Heart right ventricle (tissue), 16 donors: ENCODE measurements at regions of chr1 and their contacts with region 1.

Region 1: DNA sequence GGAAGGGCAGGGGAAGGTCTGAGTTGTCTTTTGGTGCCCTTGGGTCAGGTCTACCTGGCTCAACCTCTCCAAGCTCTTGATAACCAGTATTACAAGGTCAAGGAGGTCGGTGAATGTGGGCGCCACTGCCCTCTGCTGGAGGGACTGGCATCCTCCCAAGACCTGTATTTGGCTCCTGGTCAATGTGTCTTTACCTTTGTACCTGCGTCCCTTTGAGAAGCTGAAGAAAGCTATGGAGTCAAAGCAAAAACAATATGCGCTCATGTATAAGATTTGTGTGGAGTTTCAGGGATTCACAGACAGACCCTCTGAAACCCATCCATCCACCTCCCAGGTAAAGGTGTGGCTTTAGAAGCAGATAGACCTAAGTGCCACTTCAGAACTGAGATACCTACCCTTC is 61.8 kb upstream of the NBL1 start:
- DNase-seq: peak; percentile 40 to 61
- ATAC-seq: peak in 6 of 8 donors; percentile 27 to 63 (median 55)
- H3K4me3 ChIP-seq: no peak overlapping the region
- H3K27ac ChIP-seq: no peak overlapping the region
- H3K4me1 ChIP-seq: peaks cover 0 to 24% (median 0%) of the 10 kb centered on the region in 9 donors
- H3K27me3 ChIP-seq: no peaks in the 10 kb centered on the region
- CTCF ChIP-seq: peak; percentile 35 to 78 (median 57)

Region 2: DNA sequence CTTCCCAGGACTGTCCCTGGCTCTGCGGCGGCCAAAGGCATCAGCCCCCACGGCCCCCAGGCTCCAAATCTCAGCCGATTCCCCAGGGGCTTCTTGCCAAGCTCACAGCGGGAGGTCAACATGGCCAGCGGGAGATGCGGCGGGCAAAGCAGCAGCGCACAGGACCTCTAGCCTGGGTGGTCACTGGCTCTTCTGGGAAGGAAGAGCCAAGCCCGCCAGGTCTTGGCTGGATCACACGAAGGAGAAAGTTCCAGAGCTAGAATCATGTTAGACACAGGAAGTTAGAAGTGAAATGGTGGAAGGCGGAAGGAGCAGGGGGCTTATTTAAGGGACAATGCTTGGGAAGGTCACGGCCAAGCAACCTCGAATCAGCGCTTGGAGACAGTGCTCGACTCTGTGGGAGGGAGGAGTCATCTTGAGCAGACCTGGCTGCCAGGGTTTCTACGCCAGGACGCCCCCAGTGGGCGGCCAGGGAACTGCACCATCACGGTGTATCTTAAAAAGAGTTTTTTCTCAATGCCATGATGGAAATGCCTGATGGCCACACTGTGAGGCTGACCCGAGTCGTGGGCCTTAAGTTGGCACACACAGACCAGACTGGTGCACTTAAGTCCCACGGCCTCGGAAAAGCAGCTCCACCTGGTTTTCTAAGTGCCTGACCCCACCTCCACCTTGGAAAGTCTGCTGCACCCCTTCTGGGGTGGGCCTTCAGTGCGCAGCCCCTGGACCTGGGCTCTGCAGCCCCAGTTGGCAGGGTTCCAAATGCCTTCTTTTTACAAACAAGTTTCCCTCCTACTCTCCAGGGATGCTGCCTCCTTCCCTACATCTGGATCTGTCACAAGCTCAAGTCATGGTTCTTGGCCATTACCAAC is 240.9 kb before region 1 on chr1:
- intact Hi-C with region 1: loop called in 1 of 10 experiments (anchors 5 kb)
- DNase-seq: peak; percentile 57 to 75
- ATAC-seq: peak; percentile 23 to 62 (median 49)
- H3K4me3 ChIP-seq: no peak overlapping the region
- H3K27ac ChIP-seq: peak overlapping the region in 5 of 10 donors; percentile 7 to 41 (median 23)
- H3K4me1 ChIP-seq: peaks cover 3 to 30% (median 15%) of the 10 kb centered on the region in 9 donors
- H3K27me3 ChIP-seq: no peaks in the 10 kb centered on the region
- CTCF ChIP-seq: peak; percentile 80 to 94 (median 84)

Region 3: DNA sequence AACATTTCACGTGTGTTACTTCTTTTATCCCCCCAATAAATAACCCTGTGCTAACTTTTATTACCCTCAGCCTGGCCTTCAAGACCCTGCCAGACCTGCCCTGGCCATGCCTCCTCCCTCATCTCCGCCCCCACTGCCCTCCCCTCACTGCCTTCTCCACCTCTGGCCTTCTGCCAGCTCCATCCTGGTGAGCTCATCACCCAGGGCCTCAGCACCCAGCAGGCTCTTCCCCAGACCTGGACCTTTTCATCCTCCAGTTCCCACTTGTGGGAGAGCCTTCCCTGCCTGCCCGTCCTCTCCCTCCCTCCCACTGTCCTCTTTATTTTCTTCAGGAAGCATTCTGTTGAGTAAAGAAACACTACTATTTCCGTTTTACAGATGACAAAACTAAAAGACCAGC is 198.2 kb before region 1 on chr1:
- intact Hi-C with region 1: loop called in 1 of 10 experiments (anchors 10 kb)
- DNase-seq: peak in 1 of 2 donors; percentile 60
- ATAC-seq: peak in 6 of 8 donors; percentile 39 to 76 (median 59)
- H3K4me3 ChIP-seq: no peak overlapping the region
- H3K27ac ChIP-seq: peak overlapping the region in 3 of 10 donors; percentile 12 to 17 (median 16)
- H3K4me1 ChIP-seq: peaks cover 12 to 51% (median 35%) of the 10 kb centered on the region in 9 donors
- H3K27me3 ChIP-seq: no peaks in the 10 kb centered on the region
- CTCF ChIP-seq: no peak

Region 4: GRCh38 chr1:19390901-19391595 is 191.3 kb before region 1 on chr1:
- intact Hi-C with region 1: loop called in 5 of 10 experiments (anchors 5 to 10 kb)
- DNase-seq: peak; percentile 53 to 73
- ATAC-seq: peak in 7 of 8 donors; percentile 30 to 66 (median 58)
- H3K4me3 ChIP-seq: peak overlapping the region in 6 of 10 donors; percentile 22 to 39 (median 26)
- H3K27ac ChIP-seq: peak overlapping the region; percentile 2 to 87 (median 70)
- H3K4me1 ChIP-seq: peaks cover 16 to 87% (median 59%) of the 10 kb centered on the region in 9 donors
- H3K27me3 ChIP-seq: no peaks in the 10 kb centered on the region
- CTCF ChIP-seq: peak; percentile 56 to 94 (median 78)

Region 5: DNA sequence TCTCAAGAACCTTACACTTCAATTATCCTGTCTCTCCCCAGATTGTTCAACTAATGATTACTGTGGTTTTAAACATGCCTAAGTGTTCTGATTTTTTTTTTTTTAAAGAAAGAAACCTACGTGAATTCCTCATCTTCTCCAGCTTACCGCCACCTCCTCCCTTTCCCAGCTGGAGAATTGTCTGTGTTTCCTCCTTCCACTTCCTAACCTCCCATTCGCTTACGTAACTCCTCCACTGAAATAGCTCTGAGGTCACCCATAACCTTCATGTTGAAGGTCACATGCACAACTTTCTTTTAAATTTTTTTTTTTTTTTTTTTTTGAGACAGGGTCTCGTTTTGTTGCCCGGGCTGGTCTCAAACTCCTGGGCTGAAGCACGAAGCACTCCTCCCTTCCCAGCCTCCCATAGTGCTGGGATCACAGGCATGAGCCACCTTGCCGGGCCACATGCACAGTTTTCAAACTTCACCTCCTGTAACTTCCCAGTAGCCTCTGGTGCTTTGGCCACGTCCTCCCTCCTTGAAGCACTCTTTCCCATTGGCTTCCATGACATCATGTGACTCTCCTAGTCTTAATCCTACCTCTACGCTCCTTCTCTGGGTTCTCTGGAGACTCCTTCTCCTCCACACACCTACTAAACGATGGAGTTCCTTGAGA is 87.2 kb before region 1 on chr1:
- intact Hi-C with region 1: loop called in 1 of 10 experiments (anchors 5 kb)
- DNase-seq: peak in 1 of 2 donors; percentile 75
- ATAC-seq: peak; percentile 73 to 96 (median 88)
- H3K4me3 ChIP-seq: no peak overlapping the region
- H3K27ac ChIP-seq: peak overlapping the region; percentile 16 to 92 (median 80)
- H3K4me1 ChIP-seq: peaks cover 8 to 32% (median 29%) of the 10 kb centered on the region in 9 donors
- H3K27me3 ChIP-seq: no peaks in the 10 kb centered on the region
- CTCF ChIP-seq: no peak